Sciatic nerve (tissue), 2 donors: ENCODE measurements at regions of chr2 and their contacts with region 1.

Region 1: DNA sequence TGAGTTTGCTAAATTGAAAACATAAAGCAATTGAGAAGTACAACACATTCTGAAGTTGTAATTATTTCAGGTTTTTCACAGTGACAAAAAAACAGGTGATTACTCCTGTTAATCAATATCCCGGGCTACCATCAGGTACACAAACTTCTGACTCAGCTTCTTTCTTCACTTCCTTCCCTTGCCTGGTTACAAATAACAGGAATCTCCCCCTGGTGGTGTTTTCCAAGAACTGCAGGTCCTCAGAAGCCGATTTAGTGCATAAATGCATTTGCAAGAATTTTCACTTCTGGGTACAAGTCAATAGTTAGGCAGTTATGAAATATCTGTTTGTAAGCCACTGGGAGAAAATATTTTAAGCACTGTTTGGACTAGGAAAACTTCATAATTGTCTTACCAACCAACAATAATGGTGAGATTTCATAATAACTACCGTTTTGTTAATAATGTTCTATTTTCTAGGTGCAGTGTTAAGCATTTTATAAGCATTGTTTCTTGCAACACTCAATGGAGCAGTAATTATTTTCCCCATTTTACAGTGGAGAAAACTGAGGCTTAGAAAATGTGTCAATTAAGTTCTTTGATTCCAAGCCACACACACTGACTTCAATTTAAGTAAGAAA is 12.4 kb upstream of the GMCL1 start:
- DNase-seq: peak; percentile 83
- ATAC-seq: peak; percentile 79

Region 2: DNA sequence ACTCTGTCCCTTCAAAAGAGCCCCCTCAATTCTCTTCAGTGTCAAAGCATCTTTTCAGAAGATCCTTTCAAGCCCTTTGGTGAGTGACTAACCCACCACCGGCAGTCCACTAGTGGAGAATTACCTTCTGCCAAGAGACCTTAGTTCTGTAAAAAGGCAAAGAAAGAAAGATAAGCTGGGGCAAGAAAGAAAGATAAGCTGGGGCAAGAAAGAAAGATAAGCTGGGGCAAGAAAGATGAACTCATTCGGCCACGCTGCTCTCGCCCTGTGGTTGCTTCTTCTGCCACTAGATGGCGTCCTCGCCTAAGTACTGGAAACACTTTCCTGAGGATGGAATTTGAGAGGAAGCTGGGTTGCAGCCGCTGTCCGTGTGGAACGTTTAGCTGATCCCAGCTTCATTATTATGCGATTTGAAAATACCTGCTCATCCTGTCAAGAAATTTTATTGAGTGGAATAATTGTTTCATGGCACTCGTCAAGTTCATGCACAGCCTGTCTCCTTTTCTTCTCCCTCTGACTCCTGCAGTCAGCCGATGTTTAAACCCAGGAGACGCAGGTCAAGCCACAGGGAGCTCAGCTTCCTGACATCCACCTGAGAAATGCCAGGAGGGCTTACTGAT is 92.4 kb before region 1 on chr2:
- intact Hi-C with region 1: loop called (anchors 5 kb)
- DNase-seq: peak; percentile 95
- ATAC-seq: peak; percentile 96